ENCODE measurements at regions of chr17 and their contacts with region 1.

Region 1: GRCh38 chr17:40474419-40475002 is 26.9 kb downstream of the TNS4 start:
- DNase-seq: no peak
- ATAC-seq: no peak
- H3K4me3 ChIP-seq: no peak overlapping the region
- H3K4me3 Mint-ChIP-seq: no peak overlapping the region
- H3K27ac ChIP-seq: no peak overlapping the region
- H3K27ac Mint-ChIP-seq: no peak overlapping the region
- H3K4me1 ChIP-seq: peaks cover 12 to 23% of the 10 kb centered on the region in 2 donors
- H3K4me1 Mint-ChIP-seq: peaks cover 10% of the 10 kb centered on the region
- H3K27me3 ChIP-seq: peaks cover 0 to 4% (median 1%) of the 10 kb centered on the region in 4 experiments
- H3K27me3 Mint-ChIP-seq: no peaks in the 10 kb centered on the region
- CTCF ChIP-seq: no peak

Region 2: GRCh38 chr17:40485851-40486512 is 11.5 kb after region 1 on chr17:
- CTCF ChIA-PET with region 1: interaction called, 10 read pairs
- POLR2A ChIA-PET with region 1: interaction called, 9 read pairs
- intact Hi-C with region 1: no loop called
- DNase-seq: no peak
- ATAC-seq: no peak
- H3K4me3 ChIP-seq: no peak overlapping the region
- H3K4me3 Mint-ChIP-seq: no peak overlapping the region
- H3K27ac ChIP-seq: no peak overlapping the region
- H3K27ac Mint-ChIP-seq: no peak overlapping the region
- H3K4me1 ChIP-seq: peaks cover 32 to 42% of the 10 kb centered on the region in 2 donors
- H3K4me1 Mint-ChIP-seq: peaks cover 39% of the 10 kb centered on the region
- H3K27me3 ChIP-seq: no peaks in the 10 kb centered on the region
- H3K27me3 Mint-ChIP-seq: no peaks in the 10 kb centered on the region
- CTCF ChIP-seq: no peak